ENCODE measurements at regions of chr1 and their contacts with region 1.

Region 1: GRCh38 chr1:26233903-26234643 is at the start of gene CEP85:
- DNase-seq: peak; percentile 97 to 98
- H3K4me3 ChIP-seq: peak within 1 kb of the TSS; percentile 31 to 73 (median 43)
- H3K27ac ChIP-seq: peak within 1 kb of the TSS; percentile 64 to 95 (median 88)
- H3K4me1 ChIP-seq: peaks cover 15 to 20% of the 10 kb centered on the region in 2 donors
- H3K27me3 ChIP-seq: no peaks in the 10 kb centered on the region
- CTCF ChIP-seq: peak; percentile 53 to 95 (median 86)
- POLR2A ChIP-seq: peak in 1 of 2 donors; percentile 98
- total RNA-seq, gene CEP85: 16.0 to 27.0 (median 17.0) TPM

Region 2: GRCh38 chr1:26169669-26170471 is 64.2 kb before region 1 on chr1 and contains the start of gene ZNF593:
- intact Hi-C with region 1: loop called (anchors 5 kb)
- DNase-seq: peak; percentile 93
- H3K4me3 ChIP-seq: peak within 1 kb of the TSS; percentile 56 to 81 (median 58)
- H3K27ac ChIP-seq: peak within 1 kb of the TSS; percentile 39 to 61 (median 50)
- H3K4me1 ChIP-seq: peaks cover 8 to 18% of the 10 kb centered on the region in 2 donors
- H3K27me3 ChIP-seq: no peaks in the 10 kb centered on the region
- CTCF ChIP-seq: peak; percentile 65 to 99 (median 90)
- POLR2A ChIP-seq: peak in 1 of 2 donors; percentile 74
- total RNA-seq, gene ZNF593: 18.3 to 65.8 (median 27.3) TPM